Naive thymus-derived CD4-positive, alpha-beta T cell (primary cell): ENCODE measurements at regions of chr4 and their contacts with region 1.

Region 1: GRCh38 chr4:40056716-40057585 is at the start of gene N4BP2:
- DNase-seq: peak; percentile 58 to 82 (median 76)
- ATAC-seq: peak; percentile 79
- H3K4me3 ChIP-seq: peak within 1 kb of the TSS; percentile 80
- H3K4me3 Mint-ChIP-seq: peak within 1 kb of the TSS; percentile 91 to 100 (median 97)
- H3K27ac ChIP-seq: peak within 1 kb of the TSS; percentile 91
- H3K27ac Mint-ChIP-seq: peak within 1 kb of the TSS; percentile 94 to 99 (median 98)
- H3K4me1 ChIP-seq: peaks cover 14 to 15% of the 10 kb centered on the region in 2 donors
- H3K4me1 Mint-ChIP-seq: peaks cover 19 to 48% (median 36%) of the 10 kb centered on the region in 7 donors
- H3K27me3 ChIP-seq: no peaks in the 10 kb centered on the region
- H3K27me3 Mint-ChIP-seq: peaks cover 0 to 6% (median 0%) of the 10 kb centered on the region in 5 donors
- total RNA-seq, gene N4BP2: 16.0 to 37.2 (median 22.2) TPM

Region 2: DNA sequence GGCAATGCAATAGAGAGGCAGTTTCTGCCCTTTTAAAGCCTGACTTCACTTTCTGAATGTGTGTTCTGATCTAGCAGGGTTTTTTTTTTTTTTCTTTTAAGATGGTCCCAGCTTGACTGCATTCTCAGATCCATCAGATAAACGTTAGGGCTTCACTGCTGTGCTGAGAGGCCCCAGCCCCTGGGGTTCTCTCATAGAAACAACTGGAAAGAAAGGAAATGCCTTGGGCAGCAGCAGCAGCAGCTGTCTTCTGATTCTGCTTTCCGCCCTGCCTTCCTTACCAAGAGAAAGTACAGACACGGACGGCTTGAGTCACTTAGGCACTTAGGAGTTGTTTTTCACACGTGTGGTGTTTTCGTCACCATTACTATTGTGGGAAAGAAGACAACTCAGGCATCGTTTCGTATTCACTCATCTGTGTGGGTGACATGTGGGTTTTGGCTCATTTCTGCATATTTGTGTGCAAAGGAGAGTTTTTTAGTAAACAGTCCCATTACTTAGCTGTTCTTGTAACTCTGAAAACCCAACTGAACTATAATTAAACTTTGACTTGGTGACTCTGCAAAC is 1924.8 kb before region 1 on chr4:
- CTCF ChIA-PET with region 1: no interaction called
- POLR2A ChIA-PET with region 1: no interaction called
- intact Hi-C with region 1: loop called in 1 of 2 experiments (anchors 10 kb)
- DNase-seq: peak; percentile 13 to 78 (median 67)
- ATAC-seq: peak; percentile 78
- H3K4me3 ChIP-seq: peak overlapping the region; percentile 10
- H3K4me3 Mint-ChIP-seq: peak overlapping the region in 9 of 10 donors; percentile 23 to 78 (median 75)
- H3K27ac ChIP-seq: peak overlapping the region; percentile 21
- H3K27ac Mint-ChIP-seq: peak overlapping the region; percentile 87 to 97 (median 90)
- H3K4me1 ChIP-seq: peaks cover 37 to 56% of the 10 kb centered on the region in 2 donors
- H3K4me1 Mint-ChIP-seq: peaks cover 37 to 73% (median 57%) of the 10 kb centered on the region in 7 donors
- H3K27me3 ChIP-seq: no peaks in the 10 kb centered on the region
- H3K27me3 Mint-ChIP-seq: peaks cover 0 to 2% (median 0%) of the 10 kb centered on the region in 5 donors

Region 3: GRCh38 chr4:39365830-39366771 is 690.9 kb before region 1 on chr4 and contains the start of gene RFC1:
- CTCF ChIA-PET with region 1: no interaction called
- POLR2A ChIA-PET with region 1: no interaction called
- intact Hi-C with region 1: loop called in 1 of 2 experiments (anchors 5 kb)
- DNase-seq: peak; percentile 84 to 92 (median 91)
- ATAC-seq: peak; percentile 98
- H3K4me3 ChIP-seq: peak within 1 kb of the TSS; percentile 69
- H3K4me3 Mint-ChIP-seq: peak within 1 kb of the TSS; percentile 88 to 98 (median 94)
- H3K27ac ChIP-seq: peak within 1 kb of the TSS; percentile 84
- H3K27ac Mint-ChIP-seq: peak within 1 kb of the TSS; percentile 72 to 97 (median 92)
- H3K4me1 ChIP-seq: peaks cover 12 to 19% of the 10 kb centered on the region in 2 donors
- H3K4me1 Mint-ChIP-seq: peaks cover 33 to 59% (median 41%) of the 10 kb centered on the region in 7 donors
- H3K27me3 ChIP-seq: no peaks in the 10 kb centered on the region
- H3K27me3 Mint-ChIP-seq: no peaks in the 10 kb centered on the region
- total RNA-seq, gene RFC1: 62.4 to 66.4 (median 64.3) TPM

Region 4: DNA sequence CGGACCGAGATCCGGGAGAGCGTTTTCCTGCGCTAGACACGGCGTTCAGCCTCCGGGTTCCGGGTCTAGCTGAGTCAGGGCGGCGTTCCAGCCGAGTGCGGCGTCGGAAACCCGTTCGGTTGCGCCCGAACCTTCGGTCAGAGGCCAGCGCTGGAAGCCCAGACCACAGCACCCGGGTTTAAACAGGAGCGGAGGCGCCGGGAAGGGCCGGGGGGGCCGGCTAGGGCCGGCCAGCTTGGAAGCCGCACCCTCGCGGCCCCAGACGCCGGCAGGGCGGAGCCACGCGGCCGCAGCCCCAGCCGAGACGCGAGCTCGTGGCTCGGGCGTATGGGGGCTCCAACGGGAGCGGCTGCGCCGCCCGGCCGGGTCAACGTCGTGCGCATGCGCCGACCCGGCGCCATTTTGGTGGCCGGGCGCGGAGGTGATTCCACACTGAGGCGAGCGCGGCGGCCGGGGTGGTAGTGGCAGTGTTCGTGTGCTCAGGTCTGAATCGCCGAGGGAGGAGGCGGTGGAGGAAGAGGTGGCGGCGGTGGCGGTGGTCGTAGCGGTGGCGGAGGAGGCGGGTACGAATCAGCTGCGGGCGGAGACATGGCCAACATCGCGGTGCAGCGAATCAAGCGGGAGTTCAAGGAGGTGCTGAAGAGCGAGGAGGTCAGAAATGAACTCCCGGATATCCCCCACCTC is 359.1 kb before region 1 on chr4 and contains the start of gene UBE2K:
- CTCF ChIA-PET with region 1: no interaction called
- POLR2A ChIA-PET with region 1: interaction called, 5 read pairs
- intact Hi-C with region 1: loop called (anchors 1 kb)
- DNase-seq: peak; percentile 82 to 97 (median 91)
- ATAC-seq: peak; percentile 93
- H3K4me3 ChIP-seq: peak within 1 kb of the TSS; percentile 94
- H3K4me3 Mint-ChIP-seq: peak within 1 kb of the TSS; percentile 95 to 100 (median 98)
- H3K27ac ChIP-seq: peak within 1 kb of the TSS; percentile 98
- H3K27ac Mint-ChIP-seq: peak within 1 kb of the TSS; percentile 96 to 99 (median 97)
- H3K4me1 ChIP-seq: peaks cover 17 to 22% of the 10 kb centered on the region in 2 donors
- H3K4me1 Mint-ChIP-seq: peaks cover 19 to 53% (median 37%) of the 10 kb centered on the region in 7 donors
- H3K27me3 ChIP-seq: no peaks in the 10 kb centered on the region
- H3K27me3 Mint-ChIP-seq: no peaks in the 10 kb centered on the region
- total RNA-seq, gene UBE2K: 31.1 to 85.0 (median 43.7) TPM

Region 5: DNA sequence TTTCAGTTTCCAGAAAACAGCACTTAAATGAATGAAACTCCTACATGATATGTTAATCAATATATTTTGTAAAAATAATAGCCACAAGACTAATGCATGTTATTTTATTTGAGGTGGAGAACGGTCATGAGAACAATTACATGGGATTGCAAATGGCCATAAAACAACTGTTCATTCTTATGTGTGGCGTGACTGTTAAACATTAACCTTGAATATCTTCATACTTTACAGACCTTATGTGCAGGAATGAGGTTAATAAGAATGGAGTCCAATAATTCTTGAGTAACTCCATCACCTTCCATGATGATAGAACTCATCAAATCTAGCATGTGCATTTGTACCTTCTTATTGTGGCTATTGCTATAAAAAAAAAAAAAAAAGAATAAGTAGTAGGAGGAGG is 134.6 kb before region 1 on chr4:
- CTCF ChIA-PET with region 1: no interaction called
- POLR2A ChIA-PET with region 1: no interaction called
- intact Hi-C with region 1: no loop called
- DNase-seq: no peak
- ATAC-seq: no peak
- H3K4me3 ChIP-seq: no peak overlapping the region
- H3K4me3 Mint-ChIP-seq: no peak overlapping the region
- H3K27ac ChIP-seq: no peak overlapping the region
- H3K27ac Mint-ChIP-seq: no peak overlapping the region
- H3K4me1 ChIP-seq: no peaks in the 10 kb centered on the region
- H3K4me1 Mint-ChIP-seq: peaks cover 0 to 19% (median 13%) of the 10 kb centered on the region in 7 donors
- H3K27me3 ChIP-seq: no peaks in the 10 kb centered on the region
- H3K27me3 Mint-ChIP-seq: no peaks in the 10 kb centered on the region

Region 6: GRCh38 chr4:40046311-40046980 is 10.5 kb before region 1 on chr4:
- CTCF ChIA-PET with region 1: no interaction called
- POLR2A ChIA-PET with region 1: no interaction called
- intact Hi-C with region 1: no loop called
- DNase-seq: peak in 1 of 9 donors; percentile 52
- ATAC-seq: no peak
- H3K4me3 ChIP-seq: no peak overlapping the region
- H3K4me3 Mint-ChIP-seq: peak overlapping the region in 1 of 10 donors; percentile 41
- H3K27ac ChIP-seq: no peak overlapping the region
- H3K27ac Mint-ChIP-seq: peak overlapping the region in 3 of 9 donors; percentile 0 to 62 (median 14)
- H3K4me1 ChIP-seq: no peaks in the 10 kb centered on the region
- H3K4me1 Mint-ChIP-seq: peaks cover 0 to 6% (median 5%) of the 10 kb centered on the region in 7 donors
- H3K27me3 ChIP-seq: no peaks in the 10 kb centered on the region
- H3K27me3 Mint-ChIP-seq: no peaks in the 10 kb centered on the region

Region 7: DNA sequence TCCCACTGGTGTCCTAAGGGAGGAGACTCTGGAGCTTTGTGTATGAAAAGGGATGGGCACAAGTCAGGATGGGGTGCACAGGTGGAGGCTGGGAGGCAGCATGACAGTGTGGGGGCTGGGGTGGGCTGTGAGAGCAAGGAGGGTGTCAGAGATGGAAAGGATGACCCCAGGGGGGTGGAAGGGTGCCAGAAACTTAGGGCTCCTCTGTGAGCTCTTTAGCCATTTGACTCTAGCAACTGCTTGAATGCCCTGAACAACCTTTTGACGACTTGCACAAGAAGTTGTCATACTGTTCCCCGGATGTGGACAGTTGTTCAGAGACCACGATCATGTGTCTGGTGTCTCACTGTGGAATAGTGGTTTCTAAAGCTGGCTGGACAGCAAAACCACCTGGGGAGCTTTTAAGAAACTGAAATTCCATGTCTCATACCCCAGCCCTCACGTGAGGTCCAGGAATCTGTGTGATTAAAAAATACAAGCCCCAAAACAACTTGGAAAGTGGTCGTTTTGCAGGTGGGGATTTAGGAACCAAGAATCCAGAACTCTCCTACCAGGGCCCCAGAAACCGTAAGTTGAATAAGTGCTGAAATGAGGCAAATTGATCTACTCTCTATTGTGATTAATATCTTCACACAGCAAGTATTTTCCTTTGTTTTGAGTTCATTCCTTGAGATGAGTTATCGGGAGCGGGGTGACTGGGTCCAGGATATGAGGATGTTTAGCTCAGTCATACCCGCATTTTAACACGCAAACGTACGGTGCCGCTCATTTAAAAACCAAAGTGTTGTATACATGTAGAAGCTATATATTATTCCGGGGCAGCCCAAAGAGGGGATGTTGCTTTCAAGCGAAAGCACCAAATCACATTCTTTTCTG is 143.3 kb after region 1 on chr4:
- CTCF ChIA-PET with region 1: no interaction called
- POLR2A ChIA-PET with region 1: interaction called, 7 read pairs
- intact Hi-C with region 1: loop called in 1 of 2 experiments (anchors 1 kb)
- DNase-seq: peak in 8 of 9 donors; percentile 51 to 73 (median 61)
- ATAC-seq: peak; percentile 42
- H3K4me3 ChIP-seq: peak overlapping the region; percentile 96
- H3K4me3 Mint-ChIP-seq: peak overlapping the region; percentile 96 to 100 (median 99)
- H3K27ac ChIP-seq: peak overlapping the region; percentile 100
- H3K27ac Mint-ChIP-seq: peak overlapping the region; percentile 98 to 100 (median 99)
- H3K4me1 ChIP-seq: peaks cover 19 to 20% of the 10 kb centered on the region in 2 donors
- H3K4me1 Mint-ChIP-seq: peaks cover 37 to 54% (median 44%) of the 10 kb centered on the region in 7 donors
- H3K27me3 ChIP-seq: no peaks in the 10 kb centered on the region
- H3K27me3 Mint-ChIP-seq: peaks cover 0 to 5% (median 0%) of the 10 kb centered on the region in 5 donors

Region 8: DNA sequence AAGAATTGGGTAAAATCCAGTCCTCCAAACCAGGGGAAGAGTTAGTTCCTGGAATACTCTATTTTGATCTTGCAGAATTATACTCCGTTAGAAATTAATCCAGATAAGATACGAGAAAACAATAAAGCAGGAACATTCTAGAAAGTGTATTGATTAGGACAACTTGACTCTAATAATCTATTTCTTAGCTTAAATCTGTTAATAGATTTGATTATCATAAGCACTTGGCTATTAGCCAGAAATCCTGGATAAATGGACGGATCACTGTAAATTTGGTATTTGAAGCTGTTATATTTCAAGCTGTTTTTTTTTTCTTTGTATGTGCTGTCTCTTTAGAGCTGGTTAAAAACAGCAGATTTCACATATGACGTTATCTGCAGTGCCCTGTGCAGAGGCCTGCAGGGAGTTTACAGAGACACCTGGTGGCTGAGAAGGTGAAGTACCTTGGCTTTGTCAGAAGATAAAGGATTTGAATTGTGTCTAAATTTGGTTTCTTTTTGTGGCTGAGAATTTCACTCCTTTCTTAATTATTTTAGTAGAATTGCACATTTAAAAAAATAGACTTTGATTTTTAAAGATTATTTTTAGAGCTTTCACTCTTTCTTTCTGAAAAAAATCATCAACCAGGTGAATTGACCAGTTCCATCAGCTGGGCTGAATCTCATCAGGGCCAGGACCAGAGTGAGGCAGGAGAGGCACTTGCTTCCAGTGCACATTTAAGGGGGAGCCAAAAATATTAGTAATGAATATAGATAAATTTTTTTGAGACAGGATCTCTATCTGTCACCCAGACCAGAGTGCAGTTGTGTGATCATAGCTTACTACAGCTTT is 268.5 kb after region 1 on chr4:
- CTCF ChIA-PET with region 1: interaction called, 5 read pairs
- POLR2A ChIA-PET with region 1: interaction called, 13 read pairs
- intact Hi-C with region 1: loop called in 1 of 2 experiments (anchors 1 kb)
- DNase-seq: peak in 7 of 9 donors; percentile 70 to 85 (median 82)
- ATAC-seq: peak; percentile 100
- H3K4me3 ChIP-seq: no peak overlapping the region
- H3K4me3 Mint-ChIP-seq: peak overlapping the region in 4 of 10 donors; percentile 0 to 48 (median 14)
- H3K27ac ChIP-seq: peak overlapping the region; percentile 45
- H3K27ac Mint-ChIP-seq: peak overlapping the region in 8 of 9 donors; percentile 25 to 87 (median 64)
- H3K4me1 ChIP-seq: peaks cover 0 to 8% of the 10 kb centered on the region in 2 donors
- H3K4me1 Mint-ChIP-seq: peaks cover 13 to 40% (median 35%) of the 10 kb centered on the region in 7 donors
- H3K27me3 ChIP-seq: no peaks in the 10 kb centered on the region
- H3K27me3 Mint-ChIP-seq: peaks cover 0 to 7% (median 4%) of the 10 kb centered on the region in 5 donors

Region 9: DNA sequence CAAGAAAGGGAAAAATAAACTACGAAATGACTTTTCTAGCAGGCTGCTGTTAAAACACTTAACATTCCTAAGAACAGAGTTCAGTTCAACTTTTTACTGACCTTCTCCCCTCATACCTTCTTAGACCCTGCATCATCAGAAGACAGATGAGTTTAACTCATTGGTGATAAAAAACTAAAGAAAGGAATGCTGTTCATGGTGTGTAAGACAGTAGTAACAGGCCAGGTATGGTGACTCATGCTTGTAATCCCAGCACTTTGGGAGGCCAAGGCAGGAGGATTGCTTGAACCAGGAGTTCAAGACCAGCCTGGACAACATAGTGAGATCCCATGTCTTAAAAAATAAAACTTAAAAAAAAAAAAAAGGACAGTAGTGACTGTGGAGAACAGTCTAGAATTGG is 556.5 kb after region 1 on chr4:
- CTCF ChIA-PET with region 1: no interaction called
- POLR2A ChIA-PET with region 1: no interaction called
- intact Hi-C with region 1: no loop called
- DNase-seq: no peak
- ATAC-seq: no peak
- H3K4me3 ChIP-seq: no peak overlapping the region
- H3K4me3 Mint-ChIP-seq: peak overlapping the region in 1 of 10 donors; percentile 47
- H3K27ac ChIP-seq: no peak overlapping the region
- H3K27ac Mint-ChIP-seq: peak overlapping the region in 2 of 9 donors; percentile 40 to 43
- H3K4me1 ChIP-seq: peaks cover 0 to 8% of the 10 kb centered on the region in 2 donors
- H3K4me1 Mint-ChIP-seq: peaks cover 5 to 28% (median 22%) of the 10 kb centered on the region in 7 donors
- H3K27me3 ChIP-seq: no peaks in the 10 kb centered on the region
- H3K27me3 Mint-ChIP-seq: no peaks in the 10 kb centered on the region

Region 10: DNA sequence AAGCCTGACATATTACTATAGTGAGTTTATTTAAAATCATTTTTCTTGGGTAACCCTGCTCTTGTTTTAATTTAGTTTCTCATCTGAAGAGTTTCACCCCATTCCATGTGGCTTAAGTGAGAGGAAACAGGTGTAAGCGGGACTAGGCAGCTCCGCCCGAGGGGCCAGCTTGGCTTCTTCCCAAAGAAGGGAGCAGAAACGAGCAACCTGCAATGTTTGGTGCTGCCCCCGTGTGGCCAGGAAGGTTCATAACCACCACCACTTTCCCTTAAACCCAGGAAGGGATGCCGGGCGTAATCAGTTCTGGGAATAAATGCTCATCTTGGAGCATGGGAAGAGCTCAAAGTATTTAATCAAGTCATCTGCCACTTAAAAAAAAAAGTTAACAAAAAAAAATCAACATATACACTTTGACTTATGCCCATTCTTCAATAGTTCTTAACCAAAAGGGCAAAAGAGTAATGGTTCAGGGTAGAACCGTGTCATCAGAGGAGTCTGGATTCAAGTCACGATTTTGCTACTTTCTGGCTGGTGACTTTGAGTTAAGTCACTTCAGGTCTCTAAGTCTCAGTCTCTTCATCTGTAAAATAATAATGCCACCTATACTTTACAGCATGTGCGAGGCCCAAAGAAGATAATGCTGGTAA is 840.7 kb after region 1 on chr4:
- CTCF ChIA-PET with region 1: no interaction called
- POLR2A ChIA-PET with region 1: no interaction called
- intact Hi-C with region 1: loop called in 1 of 2 experiments (anchors 1 kb)
- DNase-seq: peak; percentile 20 to 69 (median 42)
- ATAC-seq: peak; percentile 74
- H3K4me3 ChIP-seq: no peak overlapping the region
- H3K4me3 Mint-ChIP-seq: peak overlapping the region; percentile 6 to 84 (median 76)
- H3K27ac ChIP-seq: no peak overlapping the region
- H3K27ac Mint-ChIP-seq: peak overlapping the region in 3 of 9 donors; percentile 34 to 72 (median 38)
- H3K4me1 ChIP-seq: no peaks in the 10 kb centered on the region
- H3K4me1 Mint-ChIP-seq: peaks cover 0 to 5% (median 4%) of the 10 kb centered on the region in 7 donors
- H3K27me3 ChIP-seq: no peaks in the 10 kb centered on the region
- H3K27me3 Mint-ChIP-seq: no peaks in the 10 kb centered on the region